ENCODE measurements at regions of chr2 and their contacts with region 1.

Region 1: GRCh38 chr2:37389989-37390765 is 45.7 kb downstream of the QPCT start:
- DNase-seq: peak; percentile 81
- ATAC-seq: peak; percentile 93
- H3K4me3 Mint-ChIP-seq: peak overlapping the region; percentile 16
- H3K27ac Mint-ChIP-seq: peak overlapping the region; percentile 92
- H3K4me1 Mint-ChIP-seq: peaks cover 18% of the 10 kb centered on the region
- H3K27me3 Mint-ChIP-seq: peaks cover 2% of the 10 kb centered on the region
- CTCF ChIP-seq: no peak

Region 2: GRCh38 chr2:37324786-37325624 is 65.2 kb before region 1 on chr2 and contains the start of gene PRKD3:
- CTCF ChIA-PET with region 1: interaction called, 15 read pairs
- POLR2A ChIA-PET with region 1: interaction called, 4 read pairs
- intact Hi-C with region 1: loop called (anchors 5 kb)
- DNase-seq: peak; percentile 65
- ATAC-seq: peak; percentile 81
- H3K4me3 Mint-ChIP-seq: peak within 1 kb of the TSS; percentile 93
- H3K27ac Mint-ChIP-seq: peak within 1 kb of the TSS; percentile 94
- H3K4me1 Mint-ChIP-seq: peaks cover 29% of the 10 kb centered on the region
- H3K27me3 Mint-ChIP-seq: peaks cover 11% of the 10 kb centered on the region
- CTCF ChIP-seq: no peak
- total RNA-seq, gene PRKD3: 23.8 to 25.6 TPM

Region 3: GRCh38 chr2:37405781-37406180 is 15.6 kb after region 1 on chr2:
- CTCF ChIA-PET with region 1: interaction called, 25 read pairs
- POLR2A ChIA-PET with region 1: no interaction called
- intact Hi-C with region 1: no loop called
- DNase-seq: no peak
- ATAC-seq: no peak
- H3K4me3 Mint-ChIP-seq: no peak overlapping the region
- H3K27ac Mint-ChIP-seq: no peak overlapping the region
- H3K4me1 Mint-ChIP-seq: no peaks in the 10 kb centered on the region
- H3K27me3 Mint-ChIP-seq: peaks cover 2% of the 10 kb centered on the region
- CTCF ChIP-seq: no peak

Region 4: DNA sequence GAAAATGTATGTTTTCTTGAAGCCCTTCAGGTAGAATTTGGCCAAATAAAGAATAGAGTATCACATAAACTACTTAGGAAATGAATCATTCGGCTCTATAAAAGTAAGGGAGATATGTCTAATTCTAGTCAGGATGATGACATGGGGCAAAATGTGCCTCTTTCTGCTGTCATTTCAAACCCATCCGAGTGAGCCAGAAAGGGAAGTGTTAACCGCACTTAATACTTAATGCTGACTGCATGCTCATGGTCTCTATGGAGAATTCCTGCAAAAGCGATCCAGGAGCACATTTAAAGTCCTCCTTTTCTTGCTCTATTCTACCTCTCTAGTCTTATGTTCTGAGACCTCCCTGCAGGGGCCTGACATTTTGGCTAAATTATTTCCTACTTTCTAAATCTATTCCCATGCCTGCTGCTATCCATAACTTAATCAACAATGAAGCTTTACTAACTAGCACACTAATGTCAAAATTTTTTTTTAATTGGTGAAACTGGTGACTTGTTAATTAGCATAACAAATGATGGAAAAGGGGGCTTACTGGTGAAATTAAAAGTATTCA is 153.9 kb after region 1 on chr2:
- CTCF ChIA-PET with region 1: interaction called, 12 read pairs
- POLR2A ChIA-PET with region 1: no interaction called
- intact Hi-C with region 1: no loop called
- DNase-seq: no peak
- ATAC-seq: no peak
- H3K4me3 Mint-ChIP-seq: no peak overlapping the region
- H3K27ac Mint-ChIP-seq: no peak overlapping the region
- H3K4me1 Mint-ChIP-seq: peaks cover 5% of the 10 kb centered on the region
- H3K27me3 Mint-ChIP-seq: no peaks in the 10 kb centered on the region
- CTCF ChIP-seq: no peak

Region 5: DNA sequence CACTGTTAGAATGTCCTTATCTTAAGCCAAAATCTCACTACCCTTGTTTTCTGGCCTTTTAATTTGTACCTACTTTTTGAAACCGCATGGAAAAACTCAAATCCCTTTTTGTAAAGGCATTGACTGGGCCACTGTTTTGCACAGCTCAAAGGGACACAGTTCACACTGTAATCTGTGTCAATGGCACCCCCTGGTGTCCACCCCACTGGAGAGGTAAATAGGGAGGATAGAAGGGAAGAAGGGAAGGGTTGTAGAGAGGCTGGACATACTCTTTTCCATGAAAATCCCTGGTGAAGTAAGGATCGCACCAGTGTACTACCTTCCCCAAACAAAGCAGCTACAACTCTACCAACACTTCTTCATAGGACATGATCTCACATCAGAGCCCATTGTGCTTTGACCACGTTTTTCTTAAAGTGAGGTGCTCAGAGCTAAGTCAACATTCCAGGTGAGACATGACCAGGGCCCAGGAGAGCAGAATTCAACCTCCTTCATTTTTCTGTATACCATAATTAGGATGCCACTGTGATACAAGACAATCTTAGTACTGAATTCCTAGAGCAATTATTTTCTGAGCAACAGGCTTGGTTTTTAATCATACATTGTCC is 442.5 kb after region 1 on chr2:
- CTCF ChIA-PET with region 1: interaction called, 55 read pairs
- POLR2A ChIA-PET with region 1: no interaction called
- intact Hi-C with region 1: loop called (anchors 5 kb)
- DNase-seq: peak; percentile 92
- ATAC-seq: peak; percentile 86
- H3K4me3 Mint-ChIP-seq: no peak overlapping the region
- H3K27ac Mint-ChIP-seq: no peak overlapping the region
- H3K4me1 Mint-ChIP-seq: peaks cover 19% of the 10 kb centered on the region
- H3K27me3 Mint-ChIP-seq: no peaks in the 10 kb centered on the region
- CTCF ChIP-seq: peak; percentile 86

Measured in activated CD8-positive, alpha-beta T cell treated with anti-CD3 and anti-CD28 coated beads for 36 hours (primary cell).